ENCODE measurements at regions of chr13 and their contacts with region 1.

Region 1: DNA sequence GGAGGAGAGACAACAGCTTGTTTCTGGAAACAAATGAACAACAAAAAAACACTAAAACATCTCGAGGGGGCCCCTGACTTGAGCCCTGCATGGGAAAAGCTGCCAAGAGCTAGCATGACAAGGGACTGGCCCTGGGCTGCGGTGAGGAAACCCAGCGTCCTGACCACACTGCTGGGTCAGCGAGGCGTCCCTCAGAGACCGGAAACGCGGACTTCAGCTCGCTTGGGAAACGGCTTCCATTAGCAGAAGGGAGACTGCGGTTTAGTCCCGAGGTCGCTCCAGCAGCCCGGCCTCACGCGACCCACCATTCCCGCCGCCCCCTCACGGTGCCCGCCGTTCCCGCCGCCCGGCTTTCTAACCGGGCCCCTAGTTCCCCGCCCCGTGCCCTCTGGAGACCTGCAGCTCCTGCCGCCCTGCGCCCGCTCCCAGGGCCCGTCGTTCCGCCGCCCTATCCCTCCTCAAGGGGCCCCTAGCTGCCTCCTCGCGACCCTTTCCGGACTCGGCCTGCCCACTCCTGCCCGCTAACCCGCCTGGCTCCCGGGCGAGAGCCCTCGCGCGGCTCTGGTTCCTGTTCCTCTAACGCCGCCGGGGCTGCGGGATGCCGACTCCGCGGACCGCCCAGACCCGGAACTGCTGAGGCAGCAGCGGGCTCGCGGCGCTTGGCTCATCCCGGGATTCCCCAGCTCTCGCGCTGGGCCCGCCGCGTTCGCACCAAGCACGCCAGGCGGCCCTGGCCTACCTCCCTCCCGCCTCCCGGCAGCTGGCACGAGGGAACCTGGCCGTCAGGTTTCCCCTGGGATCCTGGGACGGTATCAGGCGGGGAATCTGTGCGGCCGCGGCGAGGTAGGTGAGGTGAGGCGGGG is at the start of gene CCDC122:
- DNase-seq: peak; percentile 84
- ATAC-seq: peak; percentile 88
- H3K4me3 ChIP-seq: peak within 1 kb of the TSS; percentile 81
- H3K27ac ChIP-seq: peak within 1 kb of the TSS; percentile 86
- H3K4me1 ChIP-seq: peaks cover 12% of the 10 kb centered on the region
- H3K27me3 ChIP-seq: no peaks in the 10 kb centered on the region
- CTCF ChIP-seq: no peak
- POLR2A ChIP-seq: peak; percentile 90
- RAD21 ChIP-seq: no peak
- total RNA-seq, gene CCDC122: 0.72 and 1.9 TPM in 2 replicates

Region 2: GRCh38 chr13:42594970-42595571 is 1284.1 kb before region 1 on chr13:
- CTCF ChIA-PET with region 1: no interaction called
- POLR2A ChIA-PET with region 1: no interaction called
- dilution Hi-C with region 1: no loop called
- in situ Hi-C with region 1: no loop called
- intact Hi-C with region 1: loop called (anchors 5 kb)
- DNase-seq: peak; percentile 66
- ATAC-seq: peak; percentile 93
- H3K4me3 ChIP-seq: no peak overlapping the region
- H3K27ac ChIP-seq: no peak overlapping the region
- H3K4me1 ChIP-seq: no peaks in the 10 kb centered on the region
- H3K27me3 ChIP-seq: peaks cover 32% of the 10 kb centered on the region
- CTCF ChIP-seq: peak; percentile 81
- POLR2A ChIP-seq: no peak
- RAD21 ChIP-seq: peak; percentile 85

Region 3: GRCh38 chr13:42836930-42837690 is 1042.0 kb before region 1 on chr13:
- CTCF ChIA-PET with region 1: no interaction called
- POLR2A ChIA-PET with region 1: no interaction called
- dilution Hi-C with region 1: no loop called
- in situ Hi-C with region 1: no loop called
- intact Hi-C with region 1: loop called (anchors 2 kb)
- DNase-seq: peak; percentile 51
- ATAC-seq: peak; percentile 70
- H3K4me3 ChIP-seq: no peak overlapping the region
- H3K27ac ChIP-seq: no peak overlapping the region
- H3K4me1 ChIP-seq: peaks cover 2% of the 10 kb centered on the region; the same call in 1 of the 2 replicates
- H3K27me3 ChIP-seq: peaks cover 2% of the 10 kb centered on the region
- CTCF ChIP-seq: peak; percentile 49
- POLR2A ChIP-seq: no peak
- RAD21 ChIP-seq: peak; percentile 59

Region 4: DNA sequence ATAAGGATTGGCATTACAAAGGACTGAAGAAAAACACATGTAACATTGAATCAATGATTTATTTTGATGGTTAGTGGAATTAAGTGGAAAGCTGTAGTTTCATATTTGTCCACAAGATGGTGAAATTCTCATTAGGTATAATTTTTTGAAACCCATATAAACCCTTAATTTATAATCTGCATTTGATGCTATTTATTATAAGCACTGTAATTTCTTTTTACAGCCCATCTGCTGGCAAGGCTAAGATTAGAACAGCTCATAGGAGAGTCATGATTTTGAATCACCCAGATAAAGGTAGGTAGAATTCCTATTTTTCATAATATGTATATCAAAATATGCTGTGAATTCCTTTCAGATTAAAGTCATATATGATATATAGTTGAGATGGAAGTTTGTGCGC is 793.6 kb before region 1 on chr13:
- CTCF ChIA-PET with region 1: no interaction called
- POLR2A ChIA-PET with region 1: no interaction called
- dilution Hi-C with region 1: no loop called
- in situ Hi-C with region 1: loop called (anchors 10 kb)
- intact Hi-C with region 1: loop called (anchors 2 kb)
- DNase-seq: peak; percentile 61
- ATAC-seq: peak; percentile 51; the same call in 1 of the 2 replicates
- H3K4me3 ChIP-seq: no peak overlapping the region
- H3K27ac ChIP-seq: no peak overlapping the region
- H3K4me1 ChIP-seq: peaks cover 1% of the 10 kb centered on the region; the same call in 1 of the 2 replicates
- H3K27me3 ChIP-seq: no peaks in the 10 kb centered on the region
- CTCF ChIP-seq: peak; percentile 63
- POLR2A ChIP-seq: no peak
- RAD21 ChIP-seq: peak; percentile 68

Region 5: DNA sequence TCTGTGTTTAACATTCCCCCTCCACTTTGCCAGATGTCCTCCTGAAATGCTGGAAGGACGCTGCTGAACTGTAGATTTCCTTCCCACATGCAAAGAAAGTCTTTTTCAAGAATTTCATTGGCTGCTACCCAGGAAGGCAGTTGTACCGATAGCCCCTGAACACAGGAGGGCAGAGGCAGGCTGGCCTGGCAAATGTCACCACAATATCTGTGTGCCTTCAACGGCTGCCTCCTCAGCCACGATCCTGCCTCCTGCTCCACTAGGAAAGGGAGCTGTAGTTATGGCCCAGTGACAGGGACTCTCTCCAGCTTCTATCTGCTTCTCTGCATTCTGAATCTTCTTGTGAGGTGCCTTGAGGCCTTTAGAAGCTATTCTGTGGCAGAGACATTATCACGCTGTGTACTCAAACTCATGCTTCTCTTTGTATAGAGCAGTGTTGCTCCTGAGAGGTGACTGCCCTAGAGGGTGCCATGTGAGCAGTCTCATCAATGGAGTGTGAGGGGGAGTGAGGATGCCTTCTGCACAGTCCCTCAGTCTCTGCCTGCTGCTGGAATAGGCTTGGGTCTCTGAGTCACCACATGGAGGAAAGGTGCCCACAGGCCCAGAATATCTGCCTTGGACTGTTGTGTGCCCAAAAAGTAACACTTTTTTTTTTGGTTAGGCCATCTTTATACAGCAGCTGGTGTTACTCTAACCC is 575.9 kb before region 1 on chr13:
- CTCF ChIA-PET with region 1: interaction called, 3 read pairs
- POLR2A ChIA-PET with region 1: interaction called, 4 read pairs
- dilution Hi-C with region 1: no loop called
- in situ Hi-C with region 1: no loop called
- intact Hi-C with region 1: loop called (anchors 2 kb)
- DNase-seq: peak; percentile 70
- ATAC-seq: peak; percentile 68
- H3K4me3 ChIP-seq: no peak overlapping the region
- H3K27ac ChIP-seq: peak overlapping the region; percentile 2; the same call in 1 of the 2 replicates
- H3K4me1 ChIP-seq: peaks cover 13% of the 10 kb centered on the region
- H3K27me3 ChIP-seq: no peaks in the 10 kb centered on the region
- CTCF ChIP-seq: peak; percentile 59
- POLR2A ChIP-seq: no peak
- RAD21 ChIP-seq: peak; percentile 64

Region 6: DNA sequence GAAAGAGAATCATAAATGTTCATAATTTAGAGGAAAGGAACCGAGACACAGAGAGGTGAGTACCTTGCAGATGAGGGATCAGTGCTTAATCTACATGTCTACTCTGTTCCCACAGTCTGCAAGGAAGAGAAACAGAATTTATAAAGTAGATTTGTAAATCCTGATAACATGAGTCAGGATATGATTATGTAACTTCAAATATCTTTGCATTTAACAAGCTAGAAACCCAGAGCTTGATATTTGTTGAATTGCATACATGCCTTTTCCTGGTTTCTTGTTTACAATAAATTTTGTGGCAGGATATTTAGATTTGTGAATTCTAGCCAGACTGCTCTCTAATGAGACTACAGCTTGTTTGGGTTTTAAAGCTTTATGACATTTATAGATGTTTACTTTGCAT is 311.5 kb before region 1 on chr13:
- CTCF ChIA-PET with region 1: no interaction called
- POLR2A ChIA-PET with region 1: no interaction called
- dilution Hi-C with region 1: no loop called
- in situ Hi-C with region 1: no loop called
- intact Hi-C with region 1: loop called (anchors 10 kb)
- DNase-seq: peak; percentile 64
- ATAC-seq: peak; percentile 81
- H3K4me3 ChIP-seq: no peak overlapping the region
- H3K27ac ChIP-seq: no peak overlapping the region
- H3K4me1 ChIP-seq: peaks cover 7% of the 10 kb centered on the region
- H3K27me3 ChIP-seq: no peaks in the 10 kb centered on the region; the same call in 1 of the 2 replicates
- CTCF ChIP-seq: no peak
- POLR2A ChIP-seq: no peak
- RAD21 ChIP-seq: no peak

Region 7: DNA sequence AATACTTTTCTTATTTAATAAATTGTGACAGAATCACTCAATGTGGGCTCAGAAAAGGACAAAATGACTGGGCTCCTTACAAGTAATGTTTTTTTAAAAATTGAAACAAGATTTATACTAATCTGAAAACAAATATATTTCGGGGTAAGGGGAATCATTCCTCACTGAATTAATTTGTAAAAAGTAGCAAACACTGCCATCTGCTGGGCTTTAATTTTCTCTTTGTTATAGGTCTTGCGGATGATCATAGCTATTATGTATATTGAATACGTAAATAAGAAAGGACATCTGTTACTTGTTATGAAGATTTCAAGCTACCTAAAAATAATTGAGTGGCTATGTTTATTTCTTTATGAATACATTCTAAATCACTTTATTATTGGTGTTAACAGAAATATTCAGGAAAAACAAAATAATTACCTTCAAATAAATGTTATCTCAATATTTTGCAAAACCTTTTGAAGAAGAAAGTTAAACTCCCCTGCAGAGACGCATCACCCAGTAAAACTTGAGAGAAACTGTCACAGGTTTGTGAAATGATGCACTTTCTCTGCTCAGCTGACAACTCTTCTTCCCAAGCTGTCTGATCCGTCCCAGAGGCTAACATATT is 74.6 kb before region 1 on chr13:
- CTCF ChIA-PET with region 1: no interaction called
- POLR2A ChIA-PET with region 1: no interaction called
- dilution Hi-C with region 1: no loop called
- in situ Hi-C with region 1: no loop called
- intact Hi-C with region 1: loop called (anchors 5 kb)
- DNase-seq: peak; percentile 78
- ATAC-seq: peak; percentile 82
- H3K4me3 ChIP-seq: peak overlapping the region; percentile 3; the same call in 1 of the 2 replicates
- H3K27ac ChIP-seq: peak overlapping the region; percentile 50; the same call in 1 of the 2 replicates
- H3K4me1 ChIP-seq: peaks cover 2% of the 10 kb centered on the region; the same call in 1 of the 2 replicates
- H3K27me3 ChIP-seq: no peaks in the 10 kb centered on the region
- CTCF ChIP-seq: peak; percentile 64
- POLR2A ChIP-seq: no peak
- RAD21 ChIP-seq: peak; percentile 64

Measured in IMR-90 (cell line).